ENCODE measurements at regions of chr12 and their contacts with region 1.

Region 1: GRCh38 chr12:68807576-68808387 is at the start of gene MDM2:
- DNase-seq: peak; percentile 94 to 99 (median 97)
- ATAC-seq: peak; percentile 91
- H3K4me3 ChIP-seq: peak within 1 kb of the TSS; percentile 97
- H3K4me3 Mint-ChIP-seq: peak within 1 kb of the TSS; percentile 95
- H3K27ac ChIP-seq: peak within 1 kb of the TSS; percentile 86 to 95
- H3K27ac Mint-ChIP-seq: peak within 1 kb of the TSS; percentile 97
- H3K4me1 ChIP-seq: peaks cover 24% of the 10 kb centered on the region
- H3K4me1 Mint-ChIP-seq: peaks cover 30% of the 10 kb centered on the region
- H3K27me3 ChIP-seq: no peaks in the 10 kb centered on the region
- H3K27me3 Mint-ChIP-seq: no peaks in the 10 kb centered on the region
- CTCF ChIP-seq: peak; percentile 66
- total RNA-seq, gene MDM2: 95.1 to 98.0 TPM

Region 2: GRCh38 chr12:68331869-68332727 is 475.7 kb before region 1 on chr12 and contains the start of gene MDM1:
- CTCF ChIA-PET with region 1: no interaction called
- POLR2A ChIA-PET with region 1: no interaction called
- intact Hi-C with region 1: loop called (anchors 5 to 10 kb)
- DNase-seq: peak; percentile 88 to 99 (median 96)
- ATAC-seq: peak; percentile 95
- H3K4me3 ChIP-seq: peak within 1 kb of the TSS; percentile 56 to 71
- H3K4me3 Mint-ChIP-seq: peak within 1 kb of the TSS; percentile 88
- H3K27ac ChIP-seq: peak within 1 kb of the TSS; percentile 45 to 46
- H3K27ac Mint-ChIP-seq: peak within 1 kb of the TSS; percentile 89
- H3K4me1 ChIP-seq: peaks cover 24% of the 10 kb centered on the region
- H3K4me1 Mint-ChIP-seq: peaks cover 49% of the 10 kb centered on the region
- H3K27me3 ChIP-seq: no peaks in the 10 kb centered on the region
- H3K27me3 Mint-ChIP-seq: no peaks in the 10 kb centered on the region
- CTCF ChIP-seq: no peak
- total RNA-seq, gene MDM1: 10.6 to 12.0 TPM

Region 3: DNA sequence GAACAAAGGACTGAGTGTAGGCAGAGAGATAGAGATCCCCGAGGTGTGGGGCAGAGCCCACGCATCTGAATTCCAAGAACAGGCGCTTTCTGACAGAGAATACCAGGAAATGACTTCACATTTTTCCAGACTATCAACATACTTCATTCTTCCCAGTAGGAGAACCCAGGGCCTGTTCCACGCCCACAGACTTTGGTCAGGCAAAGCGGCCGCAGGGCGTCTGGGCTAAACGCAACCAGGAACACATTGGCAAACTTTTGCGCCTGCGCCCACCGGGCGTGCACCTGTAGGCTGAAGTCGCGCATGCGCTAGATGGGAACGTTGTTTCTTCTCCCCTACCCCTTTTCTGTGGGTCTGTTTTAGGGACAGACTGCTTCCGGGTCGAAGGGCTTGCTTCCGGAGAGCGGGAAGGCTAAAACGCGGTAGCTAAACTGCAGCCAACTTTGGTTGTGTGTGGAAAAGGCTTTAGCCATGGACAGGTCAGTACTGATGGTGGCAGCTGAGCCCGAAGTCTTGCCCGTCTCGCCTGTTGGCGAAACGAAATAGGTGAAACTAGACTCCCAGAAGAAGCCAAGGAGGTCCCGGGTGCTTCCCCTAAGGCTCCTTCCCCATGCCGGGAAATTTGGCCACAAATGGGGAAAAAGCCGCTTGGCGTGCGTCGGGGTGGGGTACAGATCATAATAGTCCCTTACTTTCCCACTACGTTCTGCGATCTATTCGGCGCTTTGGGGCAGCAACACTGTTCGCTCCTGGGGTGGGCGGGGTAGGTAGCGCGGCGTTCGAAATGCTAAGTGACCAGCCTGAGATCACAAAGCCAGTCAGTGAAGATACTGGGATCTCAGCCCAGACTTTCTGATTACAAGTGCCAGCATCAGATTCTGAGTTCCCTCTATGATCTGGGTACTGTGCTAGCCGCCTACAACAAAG is 120.9 kb before region 1 on chr12 and contains the start of gene NUP107:
- CTCF ChIA-PET with region 1: no interaction called
- POLR2A ChIA-PET with region 1: interaction called, 7 read pairs
- intact Hi-C with region 1: loop called (anchors 1 to 5 kb)
- DNase-seq: peak; percentile 95 to 99 (median 98)
- ATAC-seq: peak; percentile 96
- H3K4me3 ChIP-seq: peak within 1 kb of the TSS; percentile 91
- H3K4me3 Mint-ChIP-seq: peak within 1 kb of the TSS; percentile 99
- H3K27ac ChIP-seq: peak within 1 kb of the TSS; percentile 73 to 78
- H3K27ac Mint-ChIP-seq: peak within 1 kb of the TSS; percentile 100
- H3K4me1 ChIP-seq: peaks cover 24% of the 10 kb centered on the region
- H3K4me1 Mint-ChIP-seq: peaks cover 41% of the 10 kb centered on the region
- H3K27me3 ChIP-seq: no peaks in the 10 kb centered on the region
- H3K27me3 Mint-ChIP-seq: no peaks in the 10 kb centered on the region
- CTCF ChIP-seq: no peak
- total RNA-seq, gene NUP107: 40.1 to 45.9 TPM

Region 4: DNA sequence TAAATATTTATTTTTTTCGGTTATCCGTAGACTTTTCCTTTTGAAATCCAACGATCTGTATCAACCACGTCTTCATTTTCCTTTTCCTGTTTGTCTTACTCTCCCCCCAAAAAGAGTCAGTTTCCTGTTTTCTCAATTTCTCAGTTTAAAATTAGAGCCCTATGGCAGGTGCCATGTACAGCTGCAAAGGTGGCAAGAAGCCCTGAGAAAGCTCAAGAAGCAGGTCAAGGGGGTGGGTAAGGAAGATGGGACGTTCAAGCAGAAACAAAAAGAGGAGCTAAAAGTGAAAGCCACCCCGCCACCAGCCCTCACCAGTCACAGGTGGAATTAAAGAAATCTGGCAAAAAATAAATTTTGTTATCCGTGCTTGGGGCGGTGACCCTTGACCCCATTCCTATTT is 35.1 kb before region 1 on chr12:
- CTCF ChIA-PET with region 1: interaction called, 4 read pairs
- POLR2A ChIA-PET with region 1: interaction called, 3 read pairs
- intact Hi-C with region 1: loop called in 1 of 2 experiments (anchors 5 kb)
- DNase-seq: peak in 3 of 9 experiments; percentile 7 to 49 (median 15)
- ATAC-seq: no peak
- H3K4me3 ChIP-seq: peak overlapping the region in 1 of 2 experiments; percentile 2
- H3K4me3 Mint-ChIP-seq: peak overlapping the region; percentile 71
- H3K27ac ChIP-seq: peak overlapping the region in 1 of 2 experiments; percentile 27
- H3K27ac Mint-ChIP-seq: peak overlapping the region; percentile 94
- H3K4me1 ChIP-seq: peaks cover 14% of the 10 kb centered on the region
- H3K4me1 Mint-ChIP-seq: peaks cover 25% of the 10 kb centered on the region
- H3K27me3 ChIP-seq: no peaks in the 10 kb centered on the region
- H3K27me3 Mint-ChIP-seq: no peaks in the 10 kb centered on the region
- CTCF ChIP-seq: no peak

Region 5: GRCh38 chr12:68962875-68963855 is 155.4 kb after region 1 on chr12:
- CTCF ChIA-PET with region 1: no interaction called
- POLR2A ChIA-PET with region 1: no interaction called
- intact Hi-C with region 1: no loop called
- DNase-seq: no peak
- ATAC-seq: no peak
- H3K4me3 ChIP-seq: no peak overlapping the region
- H3K4me3 Mint-ChIP-seq: no peak overlapping the region
- H3K27ac ChIP-seq: no peak overlapping the region
- H3K27ac Mint-ChIP-seq: no peak overlapping the region
- H3K4me1 ChIP-seq: peaks cover 6% of the 10 kb centered on the region
- H3K4me1 Mint-ChIP-seq: peaks cover 8% of the 10 kb centered on the region
- H3K27me3 ChIP-seq: no peaks in the 10 kb centered on the region
- H3K27me3 Mint-ChIP-seq: peaks cover 3% of the 10 kb centered on the region
- CTCF ChIP-seq: no peak

Region 6: DNA sequence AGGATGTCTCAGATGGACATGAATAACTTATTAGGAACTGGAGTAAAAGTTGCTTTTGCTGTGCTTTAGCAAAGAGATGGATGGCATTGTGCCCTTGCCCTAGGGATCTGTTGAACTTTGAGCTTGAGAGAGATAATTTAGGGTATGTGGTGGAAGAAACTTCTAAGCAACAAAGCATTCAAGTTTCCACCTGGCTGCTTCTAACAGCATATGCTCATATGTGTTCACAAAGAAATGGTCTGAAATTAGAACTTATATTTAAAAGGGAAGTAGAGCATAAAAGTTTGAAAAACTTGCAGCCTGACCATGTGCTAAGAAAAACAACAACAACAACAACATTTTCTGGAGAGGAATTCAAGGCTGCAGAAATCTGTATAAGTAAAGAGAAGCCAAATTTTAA is 423.7 kb after region 1 on chr12:
- CTCF ChIA-PET with region 1: no interaction called
- POLR2A ChIA-PET with region 1: no interaction called
- intact Hi-C with region 1: no loop called
- DNase-seq: no peak
- ATAC-seq: no peak
- H3K4me3 ChIP-seq: no peak overlapping the region
- H3K4me3 Mint-ChIP-seq: no peak overlapping the region
- H3K27ac ChIP-seq: no peak overlapping the region
- H3K27ac Mint-ChIP-seq: no peak overlapping the region
- H3K4me1 ChIP-seq: no peaks in the 10 kb centered on the region
- H3K4me1 Mint-ChIP-seq: no peaks in the 10 kb centered on the region
- H3K27me3 ChIP-seq: no peaks in the 10 kb centered on the region
- H3K27me3 Mint-ChIP-seq: no peaks in the 10 kb centered on the region
- CTCF ChIP-seq: no peak

Region 7: DNA sequence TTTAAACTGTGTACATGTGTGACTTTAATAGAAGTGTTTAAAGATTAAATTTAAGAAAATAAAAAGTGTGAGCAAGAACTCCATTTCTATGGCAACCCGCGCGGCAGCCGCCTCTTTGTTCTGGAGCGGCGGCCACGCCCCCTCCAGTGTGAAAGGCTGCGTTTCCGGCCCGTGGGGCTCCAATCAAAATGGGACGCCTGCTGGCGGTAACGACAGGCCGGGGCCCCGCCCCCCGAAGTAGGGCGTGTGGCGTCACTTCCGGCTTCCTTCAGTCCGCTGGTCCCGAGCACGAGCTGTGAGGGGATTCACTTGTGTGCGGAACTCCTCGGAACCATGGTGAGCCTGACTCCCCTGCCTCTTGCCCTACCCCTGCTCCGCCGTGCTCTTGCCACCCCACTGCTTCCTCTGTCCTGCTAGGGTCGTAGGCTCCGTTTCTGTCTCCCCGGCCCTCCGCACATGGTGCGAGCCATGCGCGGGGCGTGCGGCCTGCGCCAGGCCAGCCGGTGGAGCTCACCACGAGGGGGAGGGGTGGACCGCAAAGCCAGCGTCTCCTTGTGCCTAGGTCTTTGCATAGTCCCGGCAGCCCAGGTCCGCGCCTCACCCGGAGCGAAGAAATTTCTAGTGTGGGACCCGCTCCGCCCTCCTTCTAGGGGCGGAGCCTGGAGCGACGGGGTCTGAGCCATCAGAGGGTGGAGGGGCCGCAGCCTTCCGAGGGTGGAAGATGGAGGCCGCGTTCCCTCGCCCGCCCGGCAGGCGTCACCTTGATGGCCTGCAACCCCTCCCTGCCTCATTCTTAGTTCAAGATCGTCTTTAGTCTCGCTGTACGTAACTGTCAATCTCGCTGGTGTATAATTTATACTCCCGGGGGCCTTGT is 777.6 kb after region 1 on chr12 and contains the start of gene CCT2:
- CTCF ChIA-PET with region 1: no interaction called
- POLR2A ChIA-PET with region 1: no interaction called
- intact Hi-C with region 1: loop called in 1 of 2 experiments (anchors 10 kb)
- DNase-seq: peak; percentile 92 to 98 (median 97)
- ATAC-seq: peak; percentile 88
- H3K4me3 ChIP-seq: peak within 1 kb of the TSS; percentile 88 to 98
- H3K4me3 Mint-ChIP-seq: peak within 1 kb of the TSS; percentile 96
- H3K27ac ChIP-seq: peak within 1 kb of the TSS; percentile 94 to 99
- H3K27ac Mint-ChIP-seq: peak within 1 kb of the TSS; percentile 96
- H3K4me1 ChIP-seq: peaks cover 11% of the 10 kb centered on the region
- H3K4me1 Mint-ChIP-seq: peaks cover 26% of the 10 kb centered on the region
- H3K27me3 ChIP-seq: no peaks in the 10 kb centered on the region
- H3K27me3 Mint-ChIP-seq: no peaks in the 10 kb centered on the region
- CTCF ChIP-seq: peak; percentile 22
- total RNA-seq, gene CCT2: 211 to 220 TPM